Vagina (tissue), 2 donors: ENCODE measurements at regions of chr7 and their contacts with region 1.

Region 1: GRCh38 chr7:68663392-68663791 is 934.9 kb upstream of the AUTS2 start:
- DNase-seq: no peak
- H3K4me3 ChIP-seq: no peak overlapping the region
- H3K27ac ChIP-seq: no peak overlapping the region
- H3K4me1 ChIP-seq: peaks cover 11% of the 10 kb centered on the region
- H3K27me3 ChIP-seq: no peaks in the 10 kb centered on the region
- CTCF ChIP-seq: no peak
- POLR2A ChIP-seq: no peak

Region 2: DNA sequence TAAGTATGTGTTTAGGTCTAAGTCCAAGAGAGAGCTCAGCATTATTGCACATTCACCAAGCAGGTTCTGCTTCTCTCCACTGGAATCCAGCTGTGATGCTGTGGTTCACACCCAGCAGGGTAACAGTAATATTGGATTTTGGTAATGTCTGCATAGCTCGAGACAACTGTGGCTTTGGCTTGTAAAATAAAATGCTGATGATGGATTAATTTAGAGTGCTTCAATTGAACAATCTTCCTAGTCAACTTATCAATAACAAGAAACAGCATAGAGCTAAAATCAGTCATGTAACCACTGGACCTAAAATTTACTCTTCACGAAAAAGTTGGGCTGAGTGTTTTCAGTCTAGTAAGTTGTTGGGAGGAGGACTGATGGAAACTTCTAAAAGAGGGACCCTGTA is 957.5 kb before region 1 on chr7:
- intact Hi-C with region 1: loop called (anchors 5 kb)
- DNase-seq: no peak
- H3K4me3 ChIP-seq: no peak overlapping the region
- H3K27ac ChIP-seq: no peak overlapping the region
- H3K4me1 ChIP-seq: no peaks in the 10 kb centered on the region
- H3K27me3 ChIP-seq: no peaks in the 10 kb centered on the region
- CTCF ChIP-seq: no peak
- POLR2A ChIP-seq: no peak